Caco-2 (cell line): ENCODE measurements at regions of chr4 and their contacts with region 1.

Region 1: GRCh38 chr4:39998659-39999345 is 21.1 kb upstream of the PDS5A start:
- DNase-seq: peak; percentile 12 to 50
- H3K4me3 ChIP-seq: no peak overlapping the region
- H3K4me3 Mint-ChIP-seq: no peak overlapping the region
- H3K27ac Mint-ChIP-seq: peak overlapping the region; percentile 53
- H3K4me1 ChIP-seq: 0 out of 2 replicates have a peak, but pooled peaks cover 4% of the 10 kb centered on the region
- H3K4me1 Mint-ChIP-seq: no peaks in the 10 kb centered on the region
- H3K27me3 ChIP-seq: no peaks in the 10 kb centered on the region
- H3K27me3 Mint-ChIP-seq: no peaks in the 10 kb centered on the region
- CTCF ChIP-seq: no peak

Region 2: DNA sequence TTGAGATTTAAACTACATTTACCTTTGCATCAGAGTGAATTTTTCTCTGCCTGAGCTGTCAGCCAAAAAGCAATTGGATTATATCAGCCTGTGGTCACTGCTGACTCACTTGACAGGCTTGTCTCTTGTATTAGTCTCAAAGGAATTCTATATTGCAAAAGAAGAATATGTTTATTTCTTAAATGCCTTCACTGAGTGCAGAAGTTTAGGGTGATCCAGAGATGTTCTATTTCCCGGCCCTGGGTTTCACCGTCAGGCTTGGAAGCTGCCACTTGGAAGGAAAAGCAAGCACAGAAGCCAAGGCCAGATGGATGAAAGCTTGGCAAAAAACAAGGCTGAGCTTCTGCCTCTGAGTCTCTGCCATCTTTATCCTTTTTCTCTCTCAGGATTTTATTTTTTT is 1050.3 kb before region 1 on chr4:
- CTCF ChIA-PET with region 1: no interaction called
- POLR2A ChIA-PET with region 1: no interaction called
- intact Hi-C with region 1: no loop called
- DNase-seq: no peak
- H3K4me3 ChIP-seq: no peak overlapping the region
- H3K4me3 Mint-ChIP-seq: no peak overlapping the region
- H3K27ac Mint-ChIP-seq: no peak overlapping the region
- H3K4me1 ChIP-seq: no peaks in the 10 kb centered on the region
- H3K4me1 Mint-ChIP-seq: peaks cover 10% of the 10 kb centered on the region
- H3K27me3 ChIP-seq: no peaks in the 10 kb centered on the region
- H3K27me3 Mint-ChIP-seq: no peaks in the 10 kb centered on the region
- CTCF ChIP-seq: no peak

Region 3: DNA sequence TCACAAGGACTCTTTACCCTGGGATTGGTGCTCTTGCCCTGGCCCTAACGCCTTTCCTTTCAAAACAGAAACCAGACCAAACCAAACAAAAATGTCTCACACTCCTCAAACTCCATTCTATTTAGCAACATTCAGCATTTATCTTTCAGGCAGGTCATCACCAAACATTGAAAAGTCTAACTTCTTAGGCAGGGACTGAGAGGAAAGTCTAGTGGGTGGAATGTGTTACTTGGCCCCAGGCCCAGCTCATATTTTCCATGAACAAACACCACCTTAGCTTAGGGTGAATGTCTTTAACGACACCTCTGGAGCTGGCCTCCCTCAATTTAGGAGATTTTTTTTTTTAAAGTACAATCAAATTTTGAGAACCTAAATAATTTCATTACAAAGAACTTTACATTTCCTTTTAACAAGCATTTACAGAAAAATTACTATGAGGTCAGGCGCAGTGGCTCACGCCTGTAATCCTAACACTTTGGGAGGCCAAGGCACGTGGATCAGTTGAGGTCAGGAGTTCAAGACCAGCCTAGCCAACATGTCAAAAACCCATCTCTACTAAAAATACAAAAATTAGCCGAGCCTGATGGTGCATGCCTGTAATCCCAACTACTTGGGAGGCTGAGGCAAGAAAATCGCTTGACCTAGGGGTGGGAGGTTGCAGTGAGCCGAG is 47.6 kb after region 1 on chr4:
- CTCF ChIA-PET with region 1: no interaction called
- POLR2A ChIA-PET with region 1: no interaction called
- intact Hi-C with region 1: loop called (anchors 1 kb)
- DNase-seq: peak; percentile 62 to 77
- H3K4me3 ChIP-seq: no peak overlapping the region
- H3K4me3 Mint-ChIP-seq: peak overlapping the region; percentile 59
- H3K27ac Mint-ChIP-seq: peak overlapping the region; percentile 88
- H3K4me1 ChIP-seq: peaks cover 10% of the 10 kb centered on the region; the same call in 1 of the 2 replicates
- H3K4me1 Mint-ChIP-seq: peaks cover 11% of the 10 kb centered on the region
- H3K27me3 ChIP-seq: no peaks in the 10 kb centered on the region
- H3K27me3 Mint-ChIP-seq: no peaks in the 10 kb centered on the region
- CTCF ChIP-seq: peak; percentile 16 to 34

Region 4: DNA sequence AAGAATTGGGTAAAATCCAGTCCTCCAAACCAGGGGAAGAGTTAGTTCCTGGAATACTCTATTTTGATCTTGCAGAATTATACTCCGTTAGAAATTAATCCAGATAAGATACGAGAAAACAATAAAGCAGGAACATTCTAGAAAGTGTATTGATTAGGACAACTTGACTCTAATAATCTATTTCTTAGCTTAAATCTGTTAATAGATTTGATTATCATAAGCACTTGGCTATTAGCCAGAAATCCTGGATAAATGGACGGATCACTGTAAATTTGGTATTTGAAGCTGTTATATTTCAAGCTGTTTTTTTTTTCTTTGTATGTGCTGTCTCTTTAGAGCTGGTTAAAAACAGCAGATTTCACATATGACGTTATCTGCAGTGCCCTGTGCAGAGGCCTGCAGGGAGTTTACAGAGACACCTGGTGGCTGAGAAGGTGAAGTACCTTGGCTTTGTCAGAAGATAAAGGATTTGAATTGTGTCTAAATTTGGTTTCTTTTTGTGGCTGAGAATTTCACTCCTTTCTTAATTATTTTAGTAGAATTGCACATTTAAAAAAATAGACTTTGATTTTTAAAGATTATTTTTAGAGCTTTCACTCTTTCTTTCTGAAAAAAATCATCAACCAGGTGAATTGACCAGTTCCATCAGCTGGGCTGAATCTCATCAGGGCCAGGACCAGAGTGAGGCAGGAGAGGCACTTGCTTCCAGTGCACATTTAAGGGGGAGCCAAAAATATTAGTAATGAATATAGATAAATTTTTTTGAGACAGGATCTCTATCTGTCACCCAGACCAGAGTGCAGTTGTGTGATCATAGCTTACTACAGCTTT is 326.6 kb after region 1 on chr4:
- CTCF ChIA-PET with region 1: no interaction called
- POLR2A ChIA-PET with region 1: no interaction called
- intact Hi-C with region 1: no loop called
- DNase-seq: peak; percentile 55 to 59
- H3K4me3 ChIP-seq: no peak overlapping the region
- H3K4me3 Mint-ChIP-seq: no peak overlapping the region
- H3K27ac Mint-ChIP-seq: no peak overlapping the region
- H3K4me1 ChIP-seq: peaks cover 9% of the 10 kb centered on the region; the same call in 1 of the 2 replicates
- H3K4me1 Mint-ChIP-seq: peaks cover 17% of the 10 kb centered on the region
- H3K27me3 ChIP-seq: no peaks in the 10 kb centered on the region; the same call in 1 of the 2 replicates
- H3K27me3 Mint-ChIP-seq: no peaks in the 10 kb centered on the region
- CTCF ChIP-seq: peak; percentile 76 to 83